Kidney (tissue), 22 donors: ENCODE measurements at regions of chr12 and their contacts with region 1.

Region 1: GRCh38 chr12:64544371-64545080 is 65.8 kb upstream of the RASSF3 start:
- DNase-seq: peak in 2 of 5 donors; percentile 77 to 78
- H3K4me3 ChIP-seq: no peak overlapping the region
- H3K27ac ChIP-seq: no peak overlapping the region
- H3K4me1 ChIP-seq: no peaks in the 10 kb centered on the region
- H3K27me3 ChIP-seq: no peaks in the 10 kb centered on the region
- CTCF ChIP-seq: no peak

Region 2: GRCh38 chr12:64596252-64596793 is 51.8 kb after region 1 on chr12:
- intact Hi-C with region 1: no loop called
- DNase-seq: no peak
- H3K4me3 ChIP-seq: no peak overlapping the region
- H3K27ac ChIP-seq: no peak overlapping the region
- H3K4me1 ChIP-seq: no peaks in the 10 kb centered on the region
- H3K27me3 ChIP-seq: no peaks in the 10 kb centered on the region
- CTCF ChIP-seq: no peak

Region 3: GRCh38 chr12:64696080-64696741 is 151.7 kb after region 1 on chr12:
- intact Hi-C with region 1: loop called (anchors 5 kb)
- DNase-seq: peak in 2 of 5 donors; percentile 61 to 69
- H3K4me3 ChIP-seq: no peak overlapping the region
- H3K27ac ChIP-seq: no peak overlapping the region
- H3K4me1 ChIP-seq: no peaks in the 10 kb centered on the region
- H3K27me3 ChIP-seq: no peaks in the 10 kb centered on the region
- CTCF ChIP-seq: peak; percentile 24